CD8-positive, alpha-beta T cell (primary cell): ENCODE measurements at regions of chrX and their contacts with region 1.

Region 1: DNA sequence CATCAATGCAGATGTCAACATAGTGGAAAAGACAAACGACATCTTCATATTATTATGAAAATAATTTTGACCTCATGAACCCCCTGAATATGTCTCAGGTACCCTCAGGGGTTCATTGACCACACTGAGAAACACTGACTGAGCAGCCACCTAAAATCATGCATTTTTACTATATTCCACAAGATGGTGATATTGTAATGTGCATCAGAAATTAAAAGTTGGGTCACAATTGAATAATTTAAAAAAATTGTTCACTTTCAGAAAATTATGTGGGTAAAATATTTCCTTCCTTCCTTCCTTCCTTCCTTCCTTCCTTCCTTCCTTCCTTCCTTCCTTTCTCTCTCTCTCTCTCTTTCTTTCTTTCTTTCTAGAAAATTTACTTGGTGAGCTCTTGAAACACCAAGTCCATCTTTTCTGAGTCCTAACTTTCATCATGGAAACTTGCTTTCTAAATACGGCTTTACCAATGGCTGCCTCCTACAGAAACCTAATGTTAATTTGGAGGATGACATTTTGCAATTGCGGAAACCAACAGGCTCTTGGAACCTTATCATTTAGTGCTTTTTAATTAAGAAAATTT is 103.6 kb downstream of the RTL3 start:
- DNase-seq: peak in 2 of 9 experiments; percentile 34 to 52
- ATAC-seq: no peak
- H3K4me3 ChIP-seq: no peak overlapping the region
- H3K4me3 Mint-ChIP-seq: no peak overlapping the region
- H3K27ac ChIP-seq: no peak overlapping the region
- H3K27ac Mint-ChIP-seq: peak overlapping the region; percentile 85
- H3K4me1 ChIP-seq: no peaks in the 10 kb centered on the region
- H3K4me1 Mint-ChIP-seq: no peaks in the 10 kb centered on the region
- H3K27me3 ChIP-seq: no peaks in the 10 kb centered on the region
- H3K27me3 Mint-ChIP-seq: no peaks in the 10 kb centered on the region
- CTCF ChIP-seq: peak; percentile 68

Region 2: GRCh38 chrX:78321809-78322208 is 233.7 kb before region 1 on chrX:
- CTCF ChIA-PET with region 1: no interaction called
- POLR2A ChIA-PET with region 1: no interaction called
- intact Hi-C with region 1: no loop called
- DNase-seq: peak in 8 of 9 experiments; percentile 29 to 77 (median 48)
- ATAC-seq: peak; percentile 80
- H3K4me3 ChIP-seq: no peak overlapping the region
- H3K4me3 Mint-ChIP-seq: no peak overlapping the region
- H3K27ac ChIP-seq: no peak overlapping the region
- H3K27ac Mint-ChIP-seq: peak overlapping the region; percentile 73
- H3K4me1 ChIP-seq: peaks cover 26% of the 10 kb centered on the region
- H3K4me1 Mint-ChIP-seq: peaks cover 25% of the 10 kb centered on the region
- H3K27me3 ChIP-seq: no peaks in the 10 kb centered on the region
- H3K27me3 Mint-ChIP-seq: no peaks in the 10 kb centered on the region
- CTCF ChIP-seq: no peak

Region 3: DNA sequence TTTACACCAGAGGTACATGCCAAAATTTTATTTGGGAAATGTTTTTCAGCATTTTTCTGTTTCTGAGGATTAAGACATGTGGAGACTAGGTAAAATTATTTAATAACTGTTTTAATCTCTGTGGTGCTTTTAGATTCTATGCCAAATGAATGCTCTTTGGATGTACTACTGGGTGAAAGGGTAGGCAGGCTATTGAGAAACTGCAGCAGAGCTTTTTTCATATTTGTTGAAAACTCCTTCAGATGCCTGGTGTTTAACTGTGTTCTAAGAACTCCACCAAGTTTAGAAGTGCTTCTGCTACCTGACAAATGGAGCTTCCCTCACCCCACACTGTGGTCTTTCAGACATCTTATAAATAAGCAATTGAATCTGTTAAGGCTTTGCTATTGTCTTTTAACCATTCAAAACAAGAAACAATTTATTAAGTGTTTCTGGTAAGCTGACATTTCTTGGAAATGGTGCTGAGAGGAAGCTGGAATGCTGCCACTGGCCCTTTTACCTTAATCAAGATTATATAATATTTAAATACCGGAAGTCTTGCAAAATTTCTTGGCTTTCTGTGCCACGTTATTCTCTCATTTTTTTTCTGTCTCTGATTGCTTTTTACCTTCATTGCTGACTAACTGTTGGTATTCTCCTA is 176.9 kb before region 1 on chrX:
- CTCF ChIA-PET with region 1: no interaction called
- POLR2A ChIA-PET with region 1: no interaction called
- intact Hi-C with region 1: no loop called
- DNase-seq: no peak
- ATAC-seq: no peak
- H3K4me3 ChIP-seq: no peak overlapping the region
- H3K4me3 Mint-ChIP-seq: no peak overlapping the region
- H3K27ac ChIP-seq: no peak overlapping the region
- H3K27ac Mint-ChIP-seq: no peak overlapping the region
- H3K4me1 ChIP-seq: no peaks in the 10 kb centered on the region
- H3K4me1 Mint-ChIP-seq: peaks cover 6% of the 10 kb centered on the region
- H3K27me3 ChIP-seq: no peaks in the 10 kb centered on the region
- H3K27me3 Mint-ChIP-seq: no peaks in the 10 kb centered on the region
- CTCF ChIP-seq: no peak

Region 4: GRCh38 chrX:78517124-78517523 is 38.4 kb before region 1 on chrX:
- CTCF ChIA-PET with region 1: no interaction called
- POLR2A ChIA-PET with region 1: no interaction called
- intact Hi-C with region 1: loop called in 1 of 2 experiments (anchors 2 kb)
- DNase-seq: peak in 8 of 9 experiments; percentile 1 to 90 (median 43)
- ATAC-seq: peak; percentile 89
- H3K4me3 ChIP-seq: no peak overlapping the region
- H3K4me3 Mint-ChIP-seq: peak overlapping the region; percentile 16
- H3K27ac ChIP-seq: no peak overlapping the region
- H3K27ac Mint-ChIP-seq: peak overlapping the region; percentile 90
- H3K4me1 ChIP-seq: peaks cover 20% of the 10 kb centered on the region
- H3K4me1 Mint-ChIP-seq: peaks cover 33% of the 10 kb centered on the region
- H3K27me3 ChIP-seq: no peaks in the 10 kb centered on the region
- H3K27me3 Mint-ChIP-seq: no peaks in the 10 kb centered on the region
- CTCF ChIP-seq: no peak

Region 5: DNA sequence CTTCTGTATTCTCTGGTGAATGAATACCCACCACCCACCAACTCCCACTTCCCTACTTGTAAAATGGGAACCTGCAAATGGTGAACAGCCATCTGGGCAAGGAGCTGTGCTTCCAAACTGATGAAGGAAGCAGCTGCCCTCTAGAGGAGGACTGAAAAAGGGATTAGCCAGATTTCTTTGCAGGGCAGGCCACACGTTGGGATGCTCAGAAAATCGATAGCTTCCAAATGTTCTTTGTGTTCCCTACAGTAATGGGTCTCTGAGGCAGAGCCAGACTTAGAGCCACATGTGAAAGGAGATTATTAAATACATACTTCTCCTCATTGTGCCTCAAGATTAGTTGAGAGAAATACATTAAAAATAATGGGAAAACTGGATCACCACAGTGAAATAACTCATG is 152.8 kb after region 1 on chrX:
- CTCF ChIA-PET with region 1: no interaction called
- POLR2A ChIA-PET with region 1: no interaction called
- intact Hi-C with region 1: loop called in 1 of 2 experiments (anchors 5 kb)
- DNase-seq: peak in 2 of 9 experiments; percentile 2 to 5
- ATAC-seq: no peak
- H3K4me3 ChIP-seq: no peak overlapping the region
- H3K4me3 Mint-ChIP-seq: no peak overlapping the region
- H3K27ac ChIP-seq: no peak overlapping the region
- H3K27ac Mint-ChIP-seq: no peak overlapping the region
- H3K4me1 ChIP-seq: no peaks in the 10 kb centered on the region
- H3K4me1 Mint-ChIP-seq: no peaks in the 10 kb centered on the region
- H3K27me3 ChIP-seq: no peaks in the 10 kb centered on the region
- H3K27me3 Mint-ChIP-seq: no peaks in the 10 kb centered on the region
- CTCF ChIP-seq: no peak

Region 6: DNA sequence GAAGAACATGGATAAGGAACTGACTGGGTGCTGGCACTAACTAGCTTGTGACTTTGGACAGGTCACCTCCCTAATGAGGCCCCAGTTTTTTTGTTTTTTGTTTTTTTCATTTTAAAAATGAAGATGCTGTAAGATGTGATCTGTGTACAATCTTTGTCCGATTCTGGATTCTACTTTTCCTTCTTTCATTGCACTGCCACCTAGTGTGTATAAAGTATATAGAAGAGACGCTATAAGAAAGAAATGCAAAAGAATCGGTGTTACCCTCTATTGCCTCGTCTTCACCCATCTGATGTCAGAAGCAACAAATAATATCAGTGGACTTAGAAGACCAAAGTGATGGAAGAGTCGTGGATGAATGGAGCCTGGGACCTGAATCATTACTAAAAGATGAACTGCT is 331.1 kb after region 1 on chrX:
- CTCF ChIA-PET with region 1: interaction called, 3 read pairs
- POLR2A ChIA-PET with region 1: no interaction called
- intact Hi-C with region 1: loop called (anchors 1 to 10 kb)
- DNase-seq: peak in 2 of 9 experiments; percentile 16 to 43
- ATAC-seq: peak; percentile 54
- H3K4me3 ChIP-seq: no peak overlapping the region
- H3K4me3 Mint-ChIP-seq: no peak overlapping the region
- H3K27ac ChIP-seq: no peak overlapping the region
- H3K27ac Mint-ChIP-seq: peak overlapping the region; percentile 16
- H3K4me1 ChIP-seq: no peaks in the 10 kb centered on the region
- H3K4me1 Mint-ChIP-seq: peaks cover 6% of the 10 kb centered on the region
- H3K27me3 ChIP-seq: no peaks in the 10 kb centered on the region
- H3K27me3 Mint-ChIP-seq: no peaks in the 10 kb centered on the region
- CTCF ChIP-seq: peak; percentile 36

Region 7: DNA sequence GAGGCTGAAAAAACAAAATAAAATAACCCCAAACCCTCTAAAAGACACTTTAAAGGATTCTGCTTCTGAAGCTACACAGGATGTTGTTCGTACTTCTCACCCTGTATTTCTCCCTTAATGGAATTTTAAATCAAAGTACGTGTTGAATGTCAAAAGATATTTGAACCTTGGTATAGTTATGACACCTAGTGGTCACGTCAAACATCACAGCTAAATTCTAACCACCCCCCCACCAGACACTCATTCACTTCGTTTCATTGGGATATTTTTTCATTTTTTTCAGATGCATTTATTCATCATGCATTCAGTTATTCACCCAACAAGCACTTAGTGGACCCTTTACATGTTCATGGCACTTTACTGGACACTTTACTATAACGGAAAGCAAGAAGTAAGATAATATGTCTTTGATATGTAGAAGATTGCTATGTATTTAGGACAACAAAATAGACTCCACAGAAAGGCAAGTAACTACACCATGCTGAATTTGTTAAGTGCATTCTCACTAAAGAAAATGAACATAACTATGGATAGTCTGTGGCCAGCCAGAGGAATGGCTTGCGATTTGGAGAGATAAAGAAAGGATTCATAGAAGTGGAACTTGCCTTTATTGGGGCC is 526.5 kb after region 1 on chrX:
- CTCF ChIA-PET with region 1: interaction called, 8 read pairs
- POLR2A ChIA-PET with region 1: no interaction called
- intact Hi-C with region 1: loop called (anchors 1 to 2 kb)
- DNase-seq: peak in 6 of 9 experiments; percentile 6 to 79 (median 30)
- ATAC-seq: peak; percentile 89
- H3K4me3 ChIP-seq: no peak overlapping the region
- H3K4me3 Mint-ChIP-seq: peak overlapping the region; percentile 74
- H3K27ac ChIP-seq: peak overlapping the region in 1 of 2 experiments; percentile 9
- H3K27ac Mint-ChIP-seq: peak overlapping the region; percentile 94
- H3K4me1 ChIP-seq: peaks cover 27% of the 10 kb centered on the region
- H3K4me1 Mint-ChIP-seq: peaks cover 30% of the 10 kb centered on the region
- H3K27me3 ChIP-seq: no peaks in the 10 kb centered on the region
- H3K27me3 Mint-ChIP-seq: no peaks in the 10 kb centered on the region
- CTCF ChIP-seq: peak; percentile 54

Region 8: GRCh38 chrX:79412972-79413371 is 857.5 kb after region 1 on chrX:
- CTCF ChIA-PET with region 1: interaction called, 6 read pairs
- POLR2A ChIA-PET with region 1: no interaction called
- intact Hi-C with region 1: loop called (anchors 1 to 2 kb)
- DNase-seq: peak in 2 of 9 experiments; percentile 49 to 64
- ATAC-seq: no peak
- H3K4me3 ChIP-seq: peak overlapping the region; percentile 25 to 27
- H3K4me3 Mint-ChIP-seq: peak overlapping the region; percentile 67
- H3K27ac ChIP-seq: no peak overlapping the region
- H3K27ac Mint-ChIP-seq: peak overlapping the region; percentile 32
- H3K4me1 ChIP-seq: no peaks in the 10 kb centered on the region
- H3K4me1 Mint-ChIP-seq: peaks cover 17% of the 10 kb centered on the region
- H3K27me3 ChIP-seq: no peaks in the 10 kb centered on the region
- H3K27me3 Mint-ChIP-seq: no peaks in the 10 kb centered on the region
- CTCF ChIP-seq: peak; percentile 55

Region 9: DNA sequence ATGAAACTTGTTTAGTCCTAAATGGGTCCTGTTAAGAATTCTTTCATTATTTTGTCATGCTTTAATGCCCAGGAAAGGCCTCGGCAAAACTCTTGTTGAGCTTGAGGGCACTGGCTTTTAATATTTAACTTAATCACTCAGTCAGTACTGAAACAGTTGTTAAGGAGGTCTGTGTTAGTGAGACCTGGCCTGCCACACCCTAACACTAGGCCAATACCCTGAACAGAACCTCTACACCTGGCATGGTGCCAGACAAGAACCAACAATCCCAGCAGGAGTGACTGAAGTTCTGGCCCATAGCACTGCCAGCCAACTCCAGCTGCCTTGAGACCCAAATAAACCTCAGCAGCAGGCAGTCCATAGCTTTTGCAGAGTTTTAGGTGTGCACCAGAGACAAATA is 897.4 kb after region 1 on chrX:
- CTCF ChIA-PET with region 1: interaction called, 4 read pairs
- POLR2A ChIA-PET with region 1: no interaction called
- intact Hi-C with region 1: loop called (anchors 1 to 5 kb)
- DNase-seq: no peak
- ATAC-seq: no peak
- H3K4me3 ChIP-seq: no peak overlapping the region
- H3K4me3 Mint-ChIP-seq: no peak overlapping the region
- H3K27ac ChIP-seq: no peak overlapping the region
- H3K27ac Mint-ChIP-seq: no peak overlapping the region
- H3K4me1 ChIP-seq: no peaks in the 10 kb centered on the region
- H3K4me1 Mint-ChIP-seq: peaks cover 4% of the 10 kb centered on the region
- H3K27me3 ChIP-seq: no peaks in the 10 kb centered on the region
- H3K27me3 Mint-ChIP-seq: no peaks in the 10 kb centered on the region
- CTCF ChIP-seq: no peak